Activated CD8-positive, alpha-beta memory T cell treated with anti-CD3 and anti-CD28 coated beads, Interleukin-2, amount 10 ng/mL, durations not matched to agents 7 days and 5 days (primary cell): ENCODE measurements at regions of chr15 and their contacts with region 1.

Region 1: GRCh38 chr15:78149068-78149804 is at the start of gene IDH3A:
- DNase-seq: peak; percentile 100
- ATAC-seq: peak; percentile 95
- H3K4me3 Mint-ChIP-seq: peak within 1 kb of the TSS; percentile 91
- H3K27ac Mint-ChIP-seq: peak within 1 kb of the TSS; percentile 90
- H3K4me1 Mint-ChIP-seq: peaks cover 45% of the 10 kb centered on the region
- H3K27me3 Mint-ChIP-seq: no peaks in the 10 kb centered on the region
- total RNA-seq, gene IDH3A: 97.9 to 105 TPM

Region 2: GRCh38 chr15:77877869-77878577 is 271.2 kb before region 1 on chr15:
- CTCF ChIA-PET with region 1: no interaction called
- DNase-seq: no peak
- ATAC-seq: no peak
- H3K4me3 Mint-ChIP-seq: no peak overlapping the region
- H3K27ac Mint-ChIP-seq: no peak overlapping the region
- H3K4me1 Mint-ChIP-seq: no peaks in the 10 kb centered on the region
- H3K27me3 Mint-ChIP-seq: no peaks in the 10 kb centered on the region

Region 3: DNA sequence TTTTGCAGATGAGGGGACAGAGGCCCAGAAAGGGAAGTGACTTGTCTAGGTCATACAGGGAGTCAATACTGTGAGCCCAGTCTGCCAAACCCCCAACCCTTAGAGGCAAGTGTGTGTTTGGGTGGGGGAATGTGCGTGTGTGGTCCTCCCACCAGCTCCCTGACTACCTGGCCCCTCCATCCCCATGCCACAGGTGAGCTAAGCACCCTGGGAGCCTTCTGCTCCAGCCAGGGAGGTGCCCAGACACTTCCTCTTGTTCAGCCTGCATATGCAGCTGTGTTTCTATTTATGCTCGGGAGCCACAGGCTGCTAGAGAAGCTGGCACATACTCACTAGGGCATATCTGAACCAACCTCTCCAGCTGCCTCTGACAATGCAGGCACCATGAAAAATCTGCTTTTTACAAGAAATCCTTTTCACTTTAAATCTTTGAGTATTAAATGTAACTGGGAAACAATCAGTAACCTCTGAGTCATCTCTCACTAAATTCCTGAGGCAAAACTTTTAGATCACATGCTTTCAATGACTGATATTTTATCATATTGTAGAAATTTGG is 92.4 kb before region 1 on chr15:
- CTCF ChIA-PET with region 1: no interaction called
- DNase-seq: peak; percentile 41
- ATAC-seq: peak; percentile 45
- H3K4me3 Mint-ChIP-seq: no peak overlapping the region
- H3K27ac Mint-ChIP-seq: peak overlapping the region; percentile 75
- H3K4me1 Mint-ChIP-seq: peaks cover 84% of the 10 kb centered on the region
- H3K27me3 Mint-ChIP-seq: no peaks in the 10 kb centered on the region

Region 4: GRCh38 chr15:78101463-78102139 is 47.6 kb before region 1 on chr15:
- CTCF ChIA-PET with region 1: no interaction called
- DNase-seq: no peak
- ATAC-seq: no peak
- H3K4me3 Mint-ChIP-seq: no peak overlapping the region
- H3K27ac Mint-ChIP-seq: peak overlapping the region; percentile 89
- H3K4me1 Mint-ChIP-seq: peaks cover 55% of the 10 kb centered on the region
- H3K27me3 Mint-ChIP-seq: no peaks in the 10 kb centered on the region

Region 5: DNA sequence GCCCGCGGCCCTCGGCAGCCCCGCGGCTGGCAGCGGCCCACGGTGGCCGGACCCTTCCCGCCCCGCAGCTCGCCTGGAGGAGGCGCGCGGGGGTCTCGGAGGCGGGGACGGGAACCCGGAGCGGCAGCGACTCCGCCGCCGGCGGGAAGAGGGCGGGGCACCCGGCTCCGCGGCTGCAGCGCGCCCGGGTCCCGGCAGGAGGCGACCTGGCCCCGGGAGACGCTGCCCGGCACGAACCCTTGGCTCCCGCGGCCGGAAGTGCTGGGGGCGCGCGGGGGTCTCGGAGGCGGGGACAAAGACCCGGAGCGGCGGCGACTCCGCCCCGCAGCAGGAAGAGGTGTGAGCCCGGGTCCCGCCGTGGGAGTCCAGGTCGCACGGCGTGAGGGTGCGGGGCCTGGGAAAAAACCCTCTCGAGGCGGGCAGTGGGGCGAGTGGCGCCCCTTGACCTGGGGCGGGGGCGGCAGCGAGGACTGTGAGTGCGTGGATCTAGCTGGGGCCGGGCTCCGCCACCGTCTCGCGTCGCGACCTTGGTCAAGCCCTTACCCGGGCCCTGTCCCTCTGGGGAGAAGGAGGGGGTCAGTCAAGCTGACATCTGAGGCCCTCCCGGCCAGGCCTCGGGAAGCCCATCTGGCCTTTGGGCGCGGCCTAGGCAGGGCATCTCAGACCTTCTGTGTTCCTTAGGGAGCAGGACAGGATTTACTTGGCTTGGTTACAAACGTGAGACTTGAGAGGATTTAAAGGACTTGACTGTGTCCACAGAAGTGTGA is 17.8 kb before region 1 on chr15 and contains the start of gene CIB2:
- CTCF ChIA-PET with region 1: interaction called, 10 read pairs
- DNase-seq: peak; percentile 82
- ATAC-seq: peak; percentile 93
- H3K4me3 Mint-ChIP-seq: peak within 1 kb of the TSS; percentile 77
- H3K27ac Mint-ChIP-seq: peak within 1 kb of the TSS; percentile 74
- H3K4me1 Mint-ChIP-seq: peaks cover 16% of the 10 kb centered on the region
- H3K27me3 Mint-ChIP-seq: no peaks in the 10 kb centered on the region
- total RNA-seq, gene CIB2: 0.94 to 1.2 TPM

Region 6: DNA sequence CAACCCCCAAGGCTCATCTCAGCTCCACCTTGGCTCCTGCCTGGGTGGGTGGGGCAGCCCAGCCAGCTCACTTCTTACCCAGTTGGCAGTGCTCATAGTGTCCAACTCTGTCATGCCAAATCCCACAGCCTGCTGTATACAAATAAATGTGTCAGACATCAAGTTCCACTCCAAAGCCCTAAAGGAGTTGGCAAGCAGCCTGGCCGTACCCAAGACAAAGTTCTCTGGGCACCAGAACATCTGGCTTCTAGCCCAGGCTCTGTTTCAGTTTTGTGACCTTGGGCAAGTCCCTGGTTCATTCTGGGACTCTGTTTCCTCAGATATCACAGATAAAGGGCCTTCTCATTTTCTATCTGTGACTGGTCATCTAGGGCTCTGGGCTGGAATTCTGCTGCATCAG is 67.5 kb after region 1 on chr15:
- CTCF ChIA-PET with region 1: no interaction called
- DNase-seq: no peak
- ATAC-seq: no peak
- H3K4me3 Mint-ChIP-seq: no peak overlapping the region
- H3K27ac Mint-ChIP-seq: no peak overlapping the region
- H3K4me1 Mint-ChIP-seq: no peaks in the 10 kb centered on the region
- H3K27me3 Mint-ChIP-seq: peaks cover 21% of the 10 kb centered on the region